Posterior cingulate gyrus (tissue), 11 donors: ENCODE measurements at regions of chr16 and their contacts with region 1.

Region 1: DNA sequence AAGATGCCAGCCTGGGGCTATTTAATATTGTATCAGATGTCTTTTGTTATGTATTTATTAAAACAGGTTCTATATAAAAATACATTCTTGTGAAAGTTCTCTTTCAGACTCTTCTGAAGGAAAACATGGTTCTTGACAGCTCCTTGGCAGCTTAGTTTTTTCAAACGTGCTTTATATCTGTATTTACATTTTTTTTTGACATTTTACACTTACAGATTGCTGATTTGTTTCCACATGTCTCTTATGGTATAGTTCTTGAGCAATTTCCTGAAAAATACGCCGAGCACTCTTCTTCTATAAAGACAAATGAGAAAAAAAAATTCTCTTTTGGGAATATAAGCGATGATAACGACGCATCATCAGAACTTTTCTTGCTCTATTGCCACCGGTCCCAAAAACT is 9.5 kb downstream of the IGSF6 start:
- DNase-seq: no peak

Region 2: DNA sequence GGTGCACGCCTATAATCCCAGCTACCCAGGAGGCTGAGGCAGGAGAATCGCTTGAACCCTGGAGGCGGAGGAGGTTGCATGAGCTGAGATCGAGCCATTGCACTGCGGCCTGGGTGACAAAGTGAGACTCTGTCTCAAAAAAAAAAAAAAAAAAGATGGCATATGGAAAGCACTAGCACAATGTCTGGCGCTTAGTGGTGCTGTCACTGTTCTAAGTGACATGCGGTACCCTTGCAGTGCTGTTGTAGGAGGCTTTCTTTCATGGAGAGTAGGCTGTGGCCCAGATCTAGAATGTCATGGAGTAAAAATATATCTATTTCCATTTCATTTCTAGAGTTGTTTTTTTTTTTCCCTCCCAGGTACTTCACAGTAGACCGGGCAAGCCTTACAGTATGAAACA is 58.0 kb before region 1 on chr16:
- intact Hi-C with region 1: loop called (anchors 5 kb)
- DNase-seq: peak in 1 of 10 donors; percentile 27